Endothelial cell of umbilical vein (primary cell): ENCODE measurements at regions of chr11 and their contacts with region 1.

Region 1: DNA sequence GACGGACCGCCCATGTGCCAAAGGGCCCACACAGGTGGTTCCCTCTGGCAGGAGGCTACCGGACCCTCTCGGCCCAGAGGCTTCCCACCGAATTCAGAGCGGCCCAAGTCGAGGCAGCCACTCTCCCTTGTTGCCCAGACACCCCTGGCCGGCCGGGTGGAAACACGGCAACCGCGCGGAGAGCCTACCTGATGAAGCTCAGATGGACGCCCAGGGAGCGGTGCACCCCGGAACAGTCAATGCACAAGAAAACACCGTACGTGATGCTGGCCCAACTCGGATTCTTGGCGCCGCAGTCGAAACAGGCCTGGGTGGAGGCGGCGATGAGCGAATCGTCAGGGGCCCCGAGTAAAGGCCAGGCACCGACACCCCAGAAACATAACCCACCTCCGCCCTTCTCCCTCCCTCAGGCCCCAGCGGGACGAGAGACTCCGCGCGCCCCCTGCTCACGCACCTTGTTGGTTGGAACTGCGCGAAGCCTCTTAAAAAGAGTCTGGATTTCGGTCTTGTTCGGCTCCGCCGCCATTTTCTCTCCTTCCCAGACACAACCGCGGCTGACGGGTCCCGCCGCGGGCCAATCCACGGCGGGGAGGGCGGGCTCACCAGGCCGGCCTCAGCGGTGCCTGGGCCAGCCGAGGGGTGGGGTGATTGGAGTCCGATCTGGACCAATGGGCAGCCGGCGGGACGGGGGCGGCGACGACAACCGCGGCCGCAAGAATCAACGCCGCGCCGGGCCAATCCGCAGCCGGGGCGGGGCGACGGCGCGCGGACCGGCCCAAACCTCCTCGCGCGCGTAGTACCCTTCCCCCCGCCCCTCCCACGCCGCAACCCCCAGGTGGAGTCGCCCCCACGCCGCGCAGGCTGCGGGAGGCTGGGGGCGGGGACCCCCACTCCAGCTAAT is at the start of gene ARFGAP2:
- DNase-seq: peak; percentile 97
- H3K4me3 ChIP-seq: peak within 1 kb of the TSS; percentile 69 to 95 (median 79)
- H3K27ac ChIP-seq: peak within 1 kb of the TSS; percentile 91
- H3K4me1 ChIP-seq: peaks cover 13% of the 10 kb centered on the region
- H3K27me3 ChIP-seq: no peaks in the 10 kb centered on the region
- CTCF ChIP-seq: no peak
- POLR2A ChIP-seq: peak; percentile 80
- total RNA-seq, gene ARFGAP2: 78.9 and 84.3 TPM in 2 replicates

Region 2: GRCh38 chr11:47161134-47161854 is 15.3 kb before region 1 on chr11:
- CTCF ChIA-PET with region 1: interaction called, 11 read pairs
- POLR2A ChIA-PET with region 1: no interaction called
- dilution Hi-C with region 1: no loop called
- intact Hi-C with region 1: no loop called
- DNase-seq: peak; percentile 52
- H3K4me3 ChIP-seq: no peak overlapping the region
- H3K27ac ChIP-seq: no peak overlapping the region
- H3K4me1 ChIP-seq: no peaks in the 10 kb centered on the region
- H3K27me3 ChIP-seq: no peaks in the 10 kb centered on the region
- CTCF ChIP-seq: peak; percentile 80 to 87
- POLR2A ChIP-seq: no peak

Region 3: GRCh38 chr11:47220401-47220824 is 43.8 kb after region 1 on chr11:
- CTCF ChIA-PET with region 1: interaction called, 13 read pairs
- POLR2A ChIA-PET with region 1: no interaction called
- dilution Hi-C with region 1: no loop called
- intact Hi-C with region 1: no loop called
- DNase-seq: peak; percentile 90
- H3K4me3 ChIP-seq: no peak overlapping the region
- H3K27ac ChIP-seq: peak overlapping the region; percentile 94
- H3K4me1 ChIP-seq: peaks cover 44% of the 10 kb centered on the region
- H3K27me3 ChIP-seq: no peaks in the 10 kb centered on the region
- CTCF ChIP-seq: no peak
- POLR2A ChIP-seq: peak; percentile 44

Region 4: DNA sequence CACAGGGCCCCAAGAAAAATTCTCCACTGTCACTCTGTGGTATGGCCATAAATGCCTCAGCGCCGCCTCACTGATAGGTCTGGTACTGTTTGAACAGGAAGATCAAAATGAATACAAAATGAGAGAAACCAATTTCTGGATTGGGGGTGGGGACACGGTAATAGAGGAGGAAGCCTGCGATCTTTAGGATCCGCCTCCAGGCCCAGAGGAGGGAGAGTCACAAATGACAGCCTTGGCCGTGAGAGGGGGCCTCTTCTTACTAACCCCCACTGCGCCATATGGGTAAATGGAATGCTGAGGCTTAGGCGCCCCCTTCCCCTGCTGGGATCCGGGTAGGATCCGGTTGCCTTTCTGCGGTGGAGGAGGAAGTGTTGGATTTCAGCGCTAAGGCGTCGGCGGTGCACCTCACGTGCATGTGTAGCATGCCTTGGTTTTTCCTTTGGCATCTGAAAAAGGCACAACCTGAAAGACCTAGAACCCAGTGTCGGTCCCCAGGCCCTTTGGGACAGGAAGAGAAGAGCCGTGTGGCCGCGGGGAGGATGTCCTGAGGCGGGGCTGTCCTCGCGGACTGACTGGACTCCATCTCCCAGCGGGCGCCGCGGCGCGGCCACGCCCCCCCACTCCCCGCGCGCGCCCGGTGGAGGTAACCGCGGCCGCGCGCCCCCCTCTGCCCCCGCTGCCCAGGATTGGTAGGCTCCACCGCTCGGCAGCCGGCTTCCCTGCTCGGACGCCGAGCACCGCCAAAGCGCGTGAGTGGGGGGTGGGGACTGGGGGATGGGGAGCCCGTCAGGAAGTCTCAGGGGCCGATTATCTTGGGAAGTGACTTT is 92.6 kb after region 1 on chr11:
- CTCF ChIA-PET with region 1: interaction called, 5 read pairs
- POLR2A ChIA-PET with region 1: no interaction called
- dilution Hi-C with region 1: no loop called
- intact Hi-C with region 1: loop called (anchors 1 kb)
- DNase-seq: peak; percentile 85
- H3K4me3 ChIP-seq: peak overlapping the region; percentile 66 to 93 (median 70)
- H3K27ac ChIP-seq: peak overlapping the region; percentile 76
- H3K4me1 ChIP-seq: peaks cover 37% of the 10 kb centered on the region
- H3K27me3 ChIP-seq: no peaks in the 10 kb centered on the region
- CTCF ChIP-seq: no peak
- POLR2A ChIP-seq: peak; percentile 8